ENCODE measurements at regions of chr1 and their contacts with region 1.

Region 1: GRCh38 chr1:8878448-8879347 is at the start of gene ENO1:
- DNase-seq: peak; percentile 88
- H3K4me3 ChIP-seq: peak within 1 kb of the TSS; percentile 97
- CTCF ChIP-seq: no peak

Region 2: DNA sequence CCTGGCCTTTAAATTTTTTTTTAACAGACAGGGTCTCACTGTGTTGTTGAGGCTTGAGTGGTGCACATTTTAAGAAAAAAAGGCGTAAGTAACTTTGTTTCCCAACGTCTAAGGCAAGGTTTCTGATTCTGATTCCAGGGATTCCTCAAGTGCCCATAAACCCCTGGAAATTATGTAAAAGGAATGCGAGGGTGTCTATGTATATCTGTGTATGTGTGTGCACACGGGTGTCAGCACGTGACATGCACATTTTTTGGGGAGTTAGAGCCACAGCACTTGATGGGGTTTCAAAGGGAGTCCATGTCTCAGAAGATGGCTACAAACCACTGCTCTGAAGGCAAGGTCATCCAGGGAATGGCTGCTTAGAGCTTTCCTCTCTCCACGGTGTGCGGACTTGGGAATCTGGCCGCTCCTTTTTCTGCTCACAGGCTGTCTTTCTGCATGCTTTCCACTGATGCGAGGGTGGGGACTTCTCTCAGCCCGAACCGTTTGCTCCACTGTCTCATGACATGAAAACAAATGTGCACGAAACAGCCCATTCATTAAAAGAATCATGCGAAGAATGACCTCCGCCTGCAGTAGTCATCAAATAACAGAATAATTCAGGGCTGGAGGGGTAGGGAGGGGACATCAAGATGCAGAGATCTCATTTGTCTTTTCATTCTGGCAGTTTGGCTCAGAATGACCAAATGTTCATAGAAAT is 42.6 kb before region 1 on chr1:
- CTCF ChIA-PET with region 1: no interaction called
- POLR2A ChIA-PET with region 1: no interaction called
- DNase-seq: no peak
- H3K4me3 ChIP-seq: no peak overlapping the region
- CTCF ChIP-seq: no peak

Region 3: GRCh38 chr1:8858888-8859706 is 19.6 kb before region 1 on chr1:
- CTCF ChIA-PET with region 1: interaction called, 73 read pairs
- POLR2A ChIA-PET with region 1: interaction called, 26 read pairs
- DNase-seq: no peak
- H3K4me3 ChIP-seq: no peak overlapping the region
- CTCF ChIP-seq: peak; percentile 60

Region 4: GRCh38 chr1:8899076-8899475 is 20.4 kb after region 1 on chr1:
- CTCF ChIA-PET with region 1: interaction called, 10 read pairs
- POLR2A ChIA-PET with region 1: interaction called, 4 read pairs
- DNase-seq: no peak
- H3K4me3 ChIP-seq: no peak overlapping the region
- CTCF ChIP-seq: no peak

Region 5: GRCh38 chr1:8976896-8977450 is 98.3 kb after region 1 on chr1:
- CTCF ChIA-PET with region 1: no interaction called
- POLR2A ChIA-PET with region 1: no interaction called
- DNase-seq: no peak
- H3K4me3 ChIP-seq: no peak overlapping the region
- CTCF ChIP-seq: no peak

Region 6: GRCh38 chr1:9025449-9025848 is 146.8 kb after region 1 on chr1:
- CTCF ChIA-PET with region 1: no interaction called
- POLR2A ChIA-PET with region 1: no interaction called
- DNase-seq: no peak
- H3K4me3 ChIP-seq: no peak overlapping the region
- CTCF ChIP-seq: no peak